HEK293 (cell line): ENCODE measurements at regions of chr4 and their contacts with region 1.

Region 1: GRCh38 chr4:26583865-26584652 is at the start of gene TBC1D19:
- H3K4me3 ChIP-seq: peak within 1 kb of the TSS; percentile 84
- H3K27ac ChIP-seq: peak within 1 kb of the TSS; percentile 13; the same call in 1 of the 2 replicates
- H3K4me1 ChIP-seq: no peaks in the 10 kb centered on the region
- CTCF ChIP-seq: no peak

Region 2: DNA sequence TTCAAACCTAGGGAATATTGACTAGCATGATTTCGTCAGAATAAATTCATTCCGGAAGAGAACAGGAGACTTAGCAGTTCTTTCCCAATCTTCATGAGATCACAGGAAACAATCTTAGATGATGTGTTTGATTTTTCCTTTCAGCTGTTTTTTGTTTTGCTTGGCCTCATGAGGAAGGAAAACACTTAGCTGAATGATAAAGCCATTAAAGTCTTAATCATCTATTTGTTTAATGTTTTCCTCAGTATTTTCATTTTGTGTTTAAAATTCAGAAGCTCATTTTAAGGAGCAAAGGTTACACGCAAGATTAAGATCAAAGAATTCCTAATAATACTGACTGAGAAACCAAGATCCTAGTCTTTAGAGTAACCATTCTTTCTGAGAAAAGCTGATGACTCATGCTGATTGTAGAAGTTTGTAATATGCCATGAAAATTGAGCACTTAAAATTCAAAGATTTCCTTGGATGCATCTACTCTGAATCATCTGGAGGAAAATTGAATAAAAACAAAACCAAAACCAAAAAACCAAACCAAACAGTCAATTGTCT is 15.5 kb before region 1 on chr4:
- CTCF ChIA-PET with region 1: no interaction called
- POLR2A ChIA-PET with region 1: interaction called, 17 read pairs
- H3K4me3 ChIP-seq: no peak overlapping the region
- H3K27ac ChIP-seq: no peak overlapping the region
- H3K4me1 ChIP-seq: peaks cover 4% of the 10 kb centered on the region; the same call in 1 of the 2 replicates
- CTCF ChIP-seq: no peak